ENCODE measurements at regions of chr15 and their contacts with region 1.

Region 1: GRCh38 chr15:75307778-75308391 is 25.2 kb downstream of the GOLGA6D start:
- DNase-seq: peak; percentile 61
- H3K4me3 Mint-ChIP-seq: no peak overlapping the region
- H3K27ac Mint-ChIP-seq: no peak overlapping the region
- H3K4me1 Mint-ChIP-seq: peaks cover 15% of the 10 kb centered on the region
- H3K27me3 Mint-ChIP-seq: peaks cover 43% of the 10 kb centered on the region
- CTCF ChIP-seq: peak; percentile 57

Region 2: DNA sequence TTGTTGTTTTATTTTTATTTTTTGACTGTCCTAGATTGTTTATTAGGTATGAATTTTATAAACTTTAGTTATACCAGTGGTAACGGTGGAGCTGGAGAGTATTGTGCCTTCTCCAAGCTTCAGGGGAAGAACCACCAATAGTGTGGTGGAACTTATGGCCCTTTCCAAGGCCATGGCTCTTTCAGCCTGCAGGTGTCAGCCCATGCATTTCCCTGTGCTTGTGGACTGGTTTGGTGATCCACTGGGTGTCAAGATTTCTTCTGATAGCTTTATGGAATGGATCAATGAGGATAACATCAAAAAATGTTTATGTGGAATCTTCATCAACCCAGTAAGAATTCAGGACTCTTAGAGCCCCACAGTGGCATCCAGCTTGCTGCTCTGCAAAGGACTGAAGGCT is 331.7 kb before region 1 on chr15:
- CTCF ChIA-PET with region 1: no interaction called
- POLR2A ChIA-PET with region 1: no interaction called
- intact Hi-C with region 1: no loop called
- DNase-seq: no peak
- H3K4me3 Mint-ChIP-seq: no peak overlapping the region
- H3K27ac Mint-ChIP-seq: no peak overlapping the region
- H3K4me1 Mint-ChIP-seq: no peaks in the 10 kb centered on the region
- H3K27me3 Mint-ChIP-seq: peaks cover 22% of the 10 kb centered on the region
- CTCF ChIP-seq: no peak

Region 3: DNA sequence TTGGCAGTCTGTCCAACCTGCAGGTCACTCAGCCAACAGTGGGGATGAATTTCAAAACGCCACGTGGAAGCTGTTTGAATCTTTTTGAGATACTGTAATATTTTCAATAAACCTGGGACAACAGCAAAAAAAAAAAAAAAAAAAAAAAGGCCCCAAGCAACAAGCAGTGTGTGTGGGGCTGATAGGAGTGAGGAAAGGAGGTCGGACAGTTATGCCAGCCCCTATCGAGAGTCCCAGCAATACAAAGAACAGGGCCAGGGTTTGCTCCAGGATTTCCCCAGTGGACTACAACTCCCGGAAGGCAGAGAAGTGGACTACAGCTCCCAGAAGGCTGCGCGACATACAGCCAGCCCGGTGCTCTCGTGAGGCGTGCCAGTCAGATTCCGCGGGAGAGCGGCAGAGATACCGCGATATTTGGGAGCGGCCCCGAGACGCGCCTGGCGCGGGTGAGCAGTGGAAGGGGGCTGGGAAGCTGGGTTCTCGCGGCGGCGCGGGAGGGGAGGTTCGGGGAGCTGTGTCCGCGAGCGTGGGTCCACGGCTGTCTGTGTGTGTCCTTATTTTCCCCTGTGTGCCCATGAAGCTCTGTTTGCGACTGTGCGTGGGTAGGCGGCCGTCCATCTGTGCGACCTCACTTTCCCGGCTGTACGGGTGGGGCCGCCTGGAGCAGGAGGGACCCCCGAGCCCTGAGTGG is 284.6 kb before region 1 on chr15 and contains the start of gene PPCDC:
- CTCF ChIA-PET with region 1: no interaction called
- POLR2A ChIA-PET with region 1: no interaction called
- intact Hi-C with region 1: loop called (anchors 10 kb)
- DNase-seq: peak; percentile 95
- H3K4me3 Mint-ChIP-seq: peak within 1 kb of the TSS; percentile 94
- H3K27ac Mint-ChIP-seq: peak within 1 kb of the TSS; percentile 95
- H3K4me1 Mint-ChIP-seq: no peaks in the 10 kb centered on the region
- H3K27me3 Mint-ChIP-seq: no peaks in the 10 kb centered on the region
- CTCF ChIP-seq: no peak
- total RNA-seq, gene PPCDC: 20.3 and 25.1 TPM in 2 replicates